Gastrocnemius medialis (tissue), 4 donors: ENCODE measurements at regions of chr4 and their contacts with region 1.

Region 1: GRCh38 chr4:99949034-99949998 is 759 bp downstream of the H2AZ1 start:
- DNase-seq: peak; percentile 81 to 89
- ATAC-seq: peak; percentile 56 to 67
- H3K4me3 ChIP-seq: peak overlapping the region; percentile 79 to 95 (median 86)
- H3K27ac ChIP-seq: peak overlapping the region; percentile 96 to 98 (median 98)
- H3K4me1 ChIP-seq: peaks cover 30 to 40% of the 10 kb centered on the region in 2 donors
- H3K27me3 ChIP-seq: no peaks in the 10 kb centered on the region
- CTCF ChIP-seq: peak; percentile 73 to 93 (median 80)
- POLR2A ChIP-seq: no peak

Region 2: GRCh38 chr4:99894161-99894997 is 54.9 kb before region 1 on chr4 and contains the start of gene LAMTOR3:
- in situ Hi-C with region 1: loop called in 2 of 4 experiments (anchors 10 kb)
- intact Hi-C with region 1: loop called (anchors 1 kb)
- DNase-seq: peak; percentile 88 to 91
- ATAC-seq: peak; percentile 99
- H3K4me3 ChIP-seq: peak within 1 kb of the TSS; percentile 85 to 95 (median 89)
- H3K27ac ChIP-seq: peak within 1 kb of the TSS; percentile 85 to 92 (median 88)
- H3K4me1 ChIP-seq: peaks cover 16 to 21% of the 10 kb centered on the region in 2 donors
- H3K27me3 ChIP-seq: no peaks in the 10 kb centered on the region
- CTCF ChIP-seq: no peak
- POLR2A ChIP-seq: peak; percentile 29 to 33
- total RNA-seq, gene LAMTOR3: 20.8 to 31.1 (median 28.9) TPM

Region 3: DNA sequence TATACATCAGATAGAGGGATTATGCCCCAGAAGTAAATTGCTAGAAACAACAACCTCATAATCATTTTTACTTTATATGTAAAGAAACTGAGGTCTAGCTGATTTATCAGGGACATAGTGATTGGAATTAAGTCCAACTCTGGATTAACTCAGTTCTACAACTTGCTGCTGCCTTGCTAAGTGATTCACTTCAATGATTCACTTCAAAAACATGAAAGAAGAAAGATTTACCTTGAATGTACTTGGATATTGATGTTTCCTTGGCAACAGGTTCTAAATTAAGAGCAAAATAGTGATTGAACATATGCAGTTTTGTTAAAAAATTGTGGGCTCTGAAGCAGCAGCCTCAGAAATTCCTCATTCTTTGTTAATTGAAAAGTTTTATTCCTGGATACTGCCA is 100.6 kb after region 1 on chr4:
- in situ Hi-C with region 1: no loop called
- intact Hi-C with region 1: no loop called
- DNase-seq: no peak
- ATAC-seq: no peak
- H3K4me3 ChIP-seq: no peak overlapping the region
- H3K27ac ChIP-seq: no peak overlapping the region
- H3K4me1 ChIP-seq: no peaks in the 10 kb centered on the region
- H3K27me3 ChIP-seq: no peaks in the 10 kb centered on the region
- CTCF ChIP-seq: no peak
- POLR2A ChIP-seq: no peak